Heart left ventricle (tissue), 16 donors: ENCODE measurements at regions of chr3 and their contacts with region 1.

Region 1: GRCh38 chr3:63911873-63912767 is at the start of gene SCAANT1:
- DNase-seq: peak; percentile 93 to 96 (median 94)
- ATAC-seq: peak; percentile 93 to 96 (median 94)
- H3K4me3 ChIP-seq: peak within 1 kb of the TSS; percentile 71 to 98 (median 83)
- H3K27ac ChIP-seq: peak within 1 kb of the TSS; percentile 96 to 100 (median 99)
- H3K4me1 ChIP-seq: peaks cover 2 to 53% (median 27%) of the 10 kb centered on the region in 12 donors
- H3K27me3 ChIP-seq: no peaks in the 10 kb centered on the region
- CTCF ChIP-seq: peak in 6 of 12 donors; percentile 6 to 27 (median 16)
- POLR2A ChIP-seq: peak in 1 of 2 donors; percentile 68
- total RNA-seq, gene SCAANT1: not detected

Region 2: GRCh38 chr3:63863148-63864007 is 48.7 kb before region 1 on chr3 and contains the starts of genes ATXN7 and THOC7:
- intact Hi-C with region 1: loop called in 7 of 10 experiments (anchors 2 to 5 kb)
- DNase-seq: peak; percentile 72 to 87 (median 78)
- ATAC-seq: peak; percentile 45 to 90 (median 84)
- H3K4me3 ChIP-seq: peak within 1 kb of the TSS; percentile 90 to 99 (median 98)
- H3K27ac ChIP-seq: peak within 1 kb of the TSS; percentile 79 to 96 (median 92)
- H3K4me1 ChIP-seq: peaks cover 3 to 22% (median 15%) of the 10 kb centered on the region in 12 donors
- H3K27me3 ChIP-seq: no peaks in the 10 kb centered on the region
- CTCF ChIP-seq: no peak
- POLR2A ChIP-seq: no peak
- total RNA-seq, gene ATXN7: 9.6 to 31.4 (median 21.2) TPM
- total RNA-seq, gene THOC7: 63.6 to 97.0 (median 77.4) TPM

Region 3: DNA sequence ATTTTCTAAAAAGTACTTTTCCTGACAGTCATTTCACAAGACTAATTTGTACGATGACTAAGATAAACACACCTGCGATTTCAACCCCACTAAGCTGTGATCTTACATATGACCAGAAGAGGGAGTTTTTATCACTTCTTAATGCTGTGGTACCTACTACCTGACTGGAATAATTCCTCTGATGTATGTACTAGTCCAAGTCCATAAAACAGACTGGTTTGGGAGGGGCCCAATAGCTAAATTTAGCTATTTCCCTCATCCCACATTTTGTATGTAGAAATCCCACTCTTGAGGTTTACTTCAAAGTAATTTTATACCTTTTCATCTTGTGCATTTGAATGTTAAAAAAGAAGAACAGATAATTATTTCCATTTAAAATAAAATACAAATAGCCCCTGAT is 49.8 kb after region 1 on chr3:
- intact Hi-C with region 1: loop called in 1 of 10 experiments (anchors 10 kb)
- DNase-seq: no peak
- ATAC-seq: peak in 3 of 4 donors; percentile 44 to 54 (median 51)
- H3K4me3 ChIP-seq: no peak overlapping the region
- H3K27ac ChIP-seq: no peak overlapping the region
- H3K4me1 ChIP-seq: peaks cover 3 to 57% (median 23%) of the 10 kb centered on the region in 12 donors
- H3K27me3 ChIP-seq: no peaks in the 10 kb centered on the region
- CTCF ChIP-seq: peak; percentile 44 to 70 (median 53)
- POLR2A ChIP-seq: no peak

Region 4: DNA sequence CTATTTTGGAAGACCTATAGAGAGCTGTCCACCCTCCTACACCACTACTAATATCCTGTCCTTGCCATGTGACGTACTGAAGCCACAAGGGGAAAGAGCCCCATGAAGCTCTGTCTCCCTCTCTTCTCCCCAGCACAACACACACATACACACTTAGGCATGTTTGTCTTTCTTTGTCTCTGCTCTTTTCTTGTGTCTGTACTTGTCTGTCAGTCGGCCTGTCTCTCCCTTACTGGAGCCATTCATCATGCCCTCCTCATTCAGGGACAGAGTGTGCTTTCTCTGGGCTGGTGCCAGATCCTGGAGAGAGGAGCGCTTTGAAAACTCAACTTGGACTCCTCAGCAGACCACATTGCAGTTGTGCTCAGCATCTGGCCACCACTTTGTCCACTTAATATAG is 63.6 kb after region 1 on chr3:
- intact Hi-C with region 1: loop called in 1 of 10 experiments (anchors 10 kb)
- DNase-seq: peak in 4 of 5 donors; percentile 52 to 77 (median 66)
- ATAC-seq: peak; percentile 56 to 85 (median 78)
- H3K4me3 ChIP-seq: no peak overlapping the region
- H3K27ac ChIP-seq: peak overlapping the region in 4 of 12 donors; percentile 3 to 69 (median 16)
- H3K4me1 ChIP-seq: peaks cover 0 to 88% (median 30%) of the 10 kb centered on the region in 12 donors
- H3K27me3 ChIP-seq: no peaks in the 10 kb centered on the region
- CTCF ChIP-seq: no peak
- POLR2A ChIP-seq: no peak